ENCODE measurements at regions of chr5 and their contacts with region 1.

Region 1: DNA sequence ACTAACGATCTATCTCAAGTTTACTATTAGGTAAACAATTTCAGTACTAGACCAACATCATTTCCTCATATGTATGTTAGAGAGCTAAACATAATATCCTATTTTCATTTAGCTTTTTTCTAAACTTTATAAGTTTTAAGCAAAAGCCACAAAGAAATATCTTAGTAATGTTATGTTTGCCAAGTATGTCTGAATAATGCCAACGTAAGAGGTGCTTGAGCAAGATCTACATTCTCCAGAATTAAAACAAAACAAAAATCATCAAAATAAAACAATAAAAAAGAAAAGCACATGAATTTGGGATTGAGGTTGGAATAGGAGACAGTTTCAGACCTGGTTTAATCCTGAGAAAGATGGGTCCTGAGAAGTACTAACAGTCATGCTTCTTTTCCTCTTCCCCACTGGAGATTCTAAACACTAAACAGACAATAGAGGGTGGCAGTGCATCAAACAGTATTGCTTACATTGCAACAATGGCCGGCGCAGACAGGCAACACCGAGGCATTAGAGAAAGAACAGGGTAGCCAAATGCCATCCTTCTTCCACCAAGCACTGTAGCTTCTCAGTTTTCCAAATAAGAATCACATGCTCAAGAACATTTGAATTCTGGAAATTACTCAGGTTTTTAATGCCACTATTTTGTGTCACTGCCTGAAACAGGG is 33.6 kb downstream of the CSNK1A1 start:
- DNase-seq: peak; percentile 32
- ATAC-seq: peak; percentile 49

Region 2: DNA sequence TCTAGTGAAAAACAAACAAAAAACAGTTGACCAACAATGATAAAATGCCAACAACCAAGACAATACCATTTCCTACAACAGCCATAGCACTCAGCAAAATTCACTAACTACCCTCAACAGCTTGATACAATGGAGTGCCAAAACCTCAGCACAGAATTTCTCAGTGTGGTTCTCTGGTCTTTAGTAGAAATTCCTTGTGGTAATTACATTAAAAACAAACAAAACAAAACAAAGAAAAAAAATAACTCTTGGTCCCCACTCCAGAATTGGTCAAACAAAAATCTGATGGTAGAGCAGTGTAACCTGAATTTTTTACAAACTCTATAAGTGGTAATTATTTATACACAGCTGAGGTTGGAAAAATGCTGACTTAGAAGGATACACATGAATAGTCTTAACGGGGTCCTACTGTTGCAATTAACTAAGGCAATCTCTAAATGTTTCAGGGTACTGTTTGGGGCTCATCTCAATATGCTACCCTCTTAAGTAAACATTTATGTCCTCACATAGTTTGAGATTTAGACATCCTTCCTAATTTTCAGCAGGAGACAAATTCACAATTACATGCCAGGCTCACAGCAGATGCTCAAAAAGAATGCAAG is 19.9 kb after region 1 on chr5:
- intact Hi-C with region 1: loop called (anchors 2 kb)
- DNase-seq: no peak
- ATAC-seq: no peak

Measured in Right ventricle myocardium inferior (tissue), 1 donor.